AG04449 (cell line): ENCODE measurements at regions of chr10 and their contacts with region 1.

Region 1: GRCh38 chr10:70925377-70926225 is 37.2 kb upstream of the PCBD1 start:
- DNase-seq: no peak
- H3K4me3 ChIP-seq: no peak overlapping the region
- CTCF ChIP-seq: peak; percentile 90

Region 2: DNA sequence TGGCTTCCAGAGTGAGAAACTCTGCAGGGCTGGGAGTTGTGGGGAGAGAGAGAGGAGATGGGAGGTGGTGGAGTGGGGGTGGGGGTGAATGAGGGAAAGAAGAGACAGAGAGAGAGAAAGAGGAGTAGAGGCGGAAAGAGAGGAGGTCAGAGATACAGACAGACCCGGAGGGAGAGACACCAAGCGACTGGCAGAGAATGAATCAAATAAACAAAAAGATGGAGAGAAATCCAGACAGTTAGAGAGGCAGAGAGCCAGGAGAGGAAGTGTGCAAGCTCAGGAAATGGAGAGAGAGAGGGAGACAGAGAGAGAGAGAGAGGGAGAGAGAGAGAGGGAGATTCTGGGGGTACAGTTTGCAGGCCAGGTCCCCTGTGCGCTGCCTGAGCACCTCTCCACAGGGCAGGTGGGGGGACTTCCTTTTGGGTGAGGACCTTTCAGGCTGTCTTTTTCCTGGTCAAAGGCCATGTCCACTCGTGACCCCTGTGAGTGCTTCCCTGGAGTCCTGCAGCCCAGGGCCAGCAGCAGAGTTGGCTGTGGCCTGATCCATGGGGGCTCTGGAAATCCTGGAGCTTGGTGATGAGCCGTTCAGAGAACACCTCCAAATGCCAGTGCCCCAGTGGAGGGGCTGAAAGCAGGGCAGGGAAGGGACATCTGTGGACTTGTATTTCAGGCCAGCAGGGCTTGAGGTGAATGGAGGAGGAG is 12.3 kb before region 1 on chr10:
- CTCF ChIA-PET with region 1: interaction called, 11 read pairs
- POLR2A ChIA-PET with region 1: no interaction called
- DNase-seq: no peak
- H3K4me3 ChIP-seq: no peak overlapping the region
- CTCF ChIP-seq: no peak

Region 3: GRCh38 chr10:70943841-70944466 is 18.4 kb after region 1 on chr10:
- CTCF ChIA-PET with region 1: interaction called, 21 read pairs
- POLR2A ChIA-PET with region 1: no interaction called
- DNase-seq: no peak
- H3K4me3 ChIP-seq: no peak overlapping the region
- CTCF ChIP-seq: no peak

Region 4: GRCh38 chr10:71212318-71213126 is 286.9 kb after region 1 on chr10 and contains the start of gene UNC5B:
- CTCF ChIA-PET with region 1: interaction called, 35 read pairs
- POLR2A ChIA-PET with region 1: no interaction called
- DNase-seq: no peak
- H3K4me3 ChIP-seq: peak within 1 kb of the TSS; percentile 73
- CTCF ChIP-seq: peak; percentile 41

Region 5: DNA sequence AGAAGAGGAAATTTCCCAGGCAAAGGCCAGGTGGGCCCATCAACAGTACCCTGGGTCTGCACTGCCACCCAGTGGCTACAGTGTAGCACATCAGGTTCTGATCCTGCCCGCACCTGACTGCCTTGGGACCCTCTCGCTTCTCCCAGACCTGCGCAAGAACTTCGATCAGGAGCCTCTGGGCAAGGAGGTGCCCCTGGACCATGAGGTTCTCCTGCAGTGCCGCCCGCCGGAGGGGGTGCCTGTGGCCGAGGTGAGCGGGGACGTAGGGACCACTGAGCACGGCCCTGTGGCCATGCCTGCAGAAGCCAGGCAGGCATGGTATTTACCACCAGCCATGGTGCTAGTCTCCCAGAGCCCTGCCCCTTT is 359.6 kb after region 1 on chr10:
- CTCF ChIA-PET with region 1: interaction called, 86 read pairs
- POLR2A ChIA-PET with region 1: interaction called, 6 read pairs
- DNase-seq: no peak
- H3K4me3 ChIP-seq: no peak overlapping the region
- CTCF ChIP-seq: peak; percentile 77